Esophagus muscularis mucosa (tissue), 4 donors: ENCODE measurements at regions of chr7 and their contacts with region 1.

Region 1: DNA sequence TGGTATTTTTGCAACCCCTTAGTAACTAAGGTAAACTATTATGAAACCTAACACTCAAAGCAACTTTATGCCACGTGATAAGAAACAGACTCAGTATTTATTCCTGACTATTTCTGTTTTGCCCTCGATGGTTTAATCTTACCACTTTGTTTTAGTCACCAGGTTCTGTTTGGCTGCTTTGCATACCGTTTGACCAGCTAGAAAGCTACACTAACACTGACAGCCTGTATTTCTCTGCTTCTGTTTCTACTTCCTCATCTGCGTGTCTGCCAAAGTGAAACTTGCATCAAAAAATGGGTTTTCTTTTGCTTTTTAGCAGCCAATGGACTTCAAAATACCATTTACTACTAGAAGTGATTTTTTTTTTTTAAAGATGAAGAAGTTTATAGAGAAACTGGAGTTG is 802.5 kb downstream of the GRM8 start:
- DNase-seq: no peak
- H3K4me3 ChIP-seq: no peak overlapping the region
- H3K27ac ChIP-seq: no peak overlapping the region
- H3K4me1 ChIP-seq: peaks cover 0 to 3% (median 0%) of the 10 kb centered on the region in 4 donors
- H3K27me3 ChIP-seq: no peaks in the 10 kb centered on the region
- CTCF ChIP-seq: no peak
- EP300 ChIP-seq: no peak
- POLR2A ChIP-seq: no peak

Region 2: DNA sequence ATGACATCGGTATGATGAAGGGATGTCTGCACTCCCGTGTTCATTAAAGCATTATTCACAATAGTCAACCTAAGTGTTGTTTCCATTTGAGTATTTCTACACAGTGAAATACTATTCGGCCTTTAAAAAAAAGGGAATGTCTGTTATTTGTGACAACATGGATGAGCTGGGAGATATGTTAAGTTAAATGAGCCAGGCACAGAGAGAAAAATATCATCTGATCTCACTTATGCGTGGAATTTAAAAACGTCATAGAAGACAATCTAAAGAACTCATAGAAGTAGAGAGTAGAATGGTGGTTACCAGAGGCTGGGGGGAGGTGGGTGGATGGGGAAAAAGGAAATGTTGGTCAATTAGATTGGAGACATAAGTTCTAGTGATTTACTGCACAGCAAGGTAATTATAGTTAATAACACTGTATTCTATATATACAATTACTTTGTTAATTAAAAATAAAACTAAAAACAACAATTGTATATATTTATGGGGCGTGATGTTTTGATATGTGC is 49.3 kb after region 1 on chr7:
- intact Hi-C with region 1: loop called (anchors 2 kb)
- DNase-seq: no peak
- H3K4me3 ChIP-seq: no peak overlapping the region
- H3K27ac ChIP-seq: no peak overlapping the region
- H3K4me1 ChIP-seq: peaks cover 0 to 13% (median 4%) of the 10 kb centered on the region in 4 donors
- H3K27me3 ChIP-seq: no peaks in the 10 kb centered on the region
- CTCF ChIP-seq: no peak
- EP300 ChIP-seq: no peak
- POLR2A ChIP-seq: no peak